CD4-positive, alpha-beta T cell (primary cell): ENCODE measurements at regions of chr1 and their contacts with region 1.

Region 1: DNA sequence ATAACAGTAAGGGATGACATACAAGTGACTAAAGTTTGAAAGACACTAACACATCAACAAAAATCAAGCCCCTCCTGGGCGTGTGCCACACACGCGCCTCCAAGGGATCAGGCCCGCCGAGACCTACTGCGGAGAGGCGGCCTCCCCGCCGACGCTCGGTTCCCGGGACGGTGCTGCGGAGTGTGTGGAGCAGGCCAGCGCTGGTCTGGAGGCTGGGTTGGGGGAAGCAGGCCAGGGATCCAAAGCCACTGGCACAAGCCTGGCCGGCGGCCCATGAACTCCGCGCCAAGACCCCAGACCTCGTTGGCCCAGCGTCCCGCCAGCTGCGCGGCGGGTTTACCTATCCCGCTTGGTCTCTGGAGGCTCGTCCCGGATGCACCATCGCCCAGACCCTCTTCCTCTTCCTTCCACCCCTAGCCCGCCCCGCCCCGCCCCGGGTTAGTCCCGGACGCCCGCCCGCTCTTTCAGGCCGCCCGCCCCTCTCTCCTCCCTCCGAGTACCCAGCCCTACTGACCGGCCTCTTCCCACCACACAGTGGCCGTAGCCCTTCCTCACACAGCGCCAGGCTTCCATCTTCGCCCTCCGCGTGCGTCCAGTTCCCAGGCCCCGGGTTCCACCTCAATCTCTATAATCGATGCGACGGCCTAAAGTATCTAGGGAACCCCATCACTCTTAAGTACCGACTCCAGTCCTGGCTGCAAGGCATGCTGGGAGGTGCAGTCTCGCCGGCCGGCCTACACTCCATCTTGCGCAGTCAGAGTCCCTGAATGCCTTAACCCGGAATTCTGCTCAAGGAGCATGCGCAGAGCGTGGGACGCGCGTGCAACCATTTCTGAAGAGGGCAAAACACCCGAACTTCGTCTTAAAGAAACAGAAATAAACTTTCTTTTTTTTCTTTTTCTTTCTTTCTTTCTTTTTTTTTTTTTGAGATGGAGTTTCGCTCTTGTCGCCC is at the start of gene ANGEL2:
- DNase-seq: peak; percentile 88 to 99 (median 94)
- ATAC-seq: peak; percentile 98
- H3K4me3 ChIP-seq: peak within 1 kb of the TSS; percentile 72
- H3K4me3 Mint-ChIP-seq: peak within 1 kb of the TSS; percentile 99
- H3K27ac ChIP-seq: peak within 1 kb of the TSS; percentile 75 to 86
- H3K27ac Mint-ChIP-seq: peak within 1 kb of the TSS; percentile 96
- H3K4me1 ChIP-seq: peaks cover 12% of the 10 kb centered on the region
- H3K4me1 Mint-ChIP-seq: peaks cover 44% of the 10 kb centered on the region
- H3K27me3 ChIP-seq: no peaks in the 10 kb centered on the region
- H3K27me3 Mint-ChIP-seq: no peaks in the 10 kb centered on the region
- CTCF ChIP-seq: no peak
- total RNA-seq, gene ANGEL2: 53.0 to 56.2 TPM

Region 2: GRCh38 chr1:211675230-211676105 is 1339.9 kb before region 1 on chr1 and contains the start of gene NEK2:
- CTCF ChIA-PET with region 1: no interaction called
- POLR2A ChIA-PET with region 1: no interaction called
- intact Hi-C with region 1: loop called in 1 of 2 experiments (anchors 10 kb)
- DNase-seq: peak; percentile 70 to 93 (median 79)
- ATAC-seq: peak; percentile 94
- H3K4me3 ChIP-seq: peak within 1 kb of the TSS; percentile 67
- H3K4me3 Mint-ChIP-seq: peak within 1 kb of the TSS; percentile 92
- H3K27ac ChIP-seq: no peak within 1 kb of the TSS
- H3K27ac Mint-ChIP-seq: peak within 1 kb of the TSS; percentile 73
- H3K4me1 ChIP-seq: peaks cover 15% of the 10 kb centered on the region
- H3K4me1 Mint-ChIP-seq: peaks cover 7% of the 10 kb centered on the region
- H3K27me3 ChIP-seq: no peaks in the 10 kb centered on the region
- H3K27me3 Mint-ChIP-seq: no peaks in the 10 kb centered on the region
- CTCF ChIP-seq: no peak
- total RNA-seq, gene NEK2: not detected

Region 3: DNA sequence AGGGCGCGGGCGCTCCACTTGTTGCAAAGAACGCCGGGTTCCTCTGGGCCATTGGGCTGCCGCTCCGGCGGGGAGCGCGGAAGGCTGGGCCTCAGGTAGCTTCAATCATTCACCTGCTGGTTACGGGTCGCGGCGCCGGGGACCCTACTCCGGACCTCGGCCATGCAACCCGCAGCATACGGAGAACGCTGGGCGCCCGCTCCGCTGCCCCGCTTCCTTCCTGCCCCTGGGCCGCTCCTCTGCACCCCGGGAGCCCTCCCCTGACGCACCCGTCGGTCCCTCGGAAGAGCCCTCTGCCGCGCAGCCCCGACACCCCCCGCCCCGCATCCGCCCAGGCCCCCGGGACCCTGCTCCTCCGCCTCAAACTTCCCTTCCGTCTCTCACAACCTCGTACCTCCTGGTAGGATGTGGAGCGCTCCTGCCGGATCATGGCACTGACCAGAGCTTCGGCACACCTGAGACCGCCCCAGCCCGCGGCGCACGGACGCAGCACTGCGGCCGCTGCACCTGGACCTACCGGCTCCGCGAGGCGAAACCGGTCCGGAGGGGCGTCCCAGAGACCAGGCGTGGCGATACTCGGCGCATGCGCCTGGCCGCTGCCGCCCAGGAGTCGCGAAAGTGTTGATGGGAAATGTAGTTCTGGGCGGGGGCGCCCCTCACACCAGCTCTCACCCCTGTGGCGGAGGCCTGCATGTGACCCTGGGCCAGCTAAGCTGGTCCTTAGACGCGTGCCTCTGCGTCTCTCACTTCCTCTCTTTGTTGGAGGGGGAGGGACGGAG is 600.9 kb before region 1 on chr1 and contains the start of gene PACC1:
- CTCF ChIA-PET with region 1: no interaction called
- POLR2A ChIA-PET with region 1: no interaction called
- intact Hi-C with region 1: loop called in 1 of 2 experiments (anchors 10 kb)
- DNase-seq: peak; percentile 70 to 95 (median 81)
- ATAC-seq: peak; percentile 85
- H3K4me3 ChIP-seq: peak within 1 kb of the TSS; percentile 76
- H3K4me3 Mint-ChIP-seq: peak within 1 kb of the TSS; percentile 89
- H3K27ac ChIP-seq: peak within 1 kb of the TSS; percentile 40 to 72
- H3K27ac Mint-ChIP-seq: peak within 1 kb of the TSS; percentile 82
- H3K4me1 ChIP-seq: peaks cover 30% of the 10 kb centered on the region
- H3K4me1 Mint-ChIP-seq: peaks cover 22% of the 10 kb centered on the region
- H3K27me3 ChIP-seq: no peaks in the 10 kb centered on the region
- H3K27me3 Mint-ChIP-seq: no peaks in the 10 kb centered on the region
- CTCF ChIP-seq: no peak
- total RNA-seq, gene PACC1: 1.8 to 2.1 TPM

Region 4: DNA sequence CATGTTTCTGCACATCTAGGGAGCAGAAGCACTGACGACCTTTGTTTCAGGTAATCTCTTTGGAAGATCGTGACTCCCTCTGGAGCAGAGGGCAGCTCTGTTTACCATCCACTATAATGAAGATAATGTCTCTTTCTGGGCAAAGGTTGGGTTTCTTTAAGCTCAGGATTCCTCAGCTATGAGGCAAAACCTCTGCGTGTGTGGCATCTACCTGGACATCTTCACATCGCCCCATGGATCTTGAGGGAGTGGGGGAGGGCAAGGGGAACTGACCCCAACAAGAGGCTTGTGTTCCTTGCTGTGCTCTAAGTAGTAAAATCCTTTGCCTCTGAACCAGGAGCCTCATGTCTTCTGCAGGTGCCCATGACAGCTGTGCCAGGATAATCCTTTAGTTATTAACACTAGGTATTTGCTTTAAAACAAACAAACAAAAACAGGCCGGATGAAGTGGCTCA is 187.5 kb before region 1 on chr1:
- CTCF ChIA-PET with region 1: no interaction called
- POLR2A ChIA-PET with region 1: no interaction called
- intact Hi-C with region 1: no loop called
- DNase-seq: no peak
- ATAC-seq: no peak
- H3K4me3 ChIP-seq: no peak overlapping the region
- H3K4me3 Mint-ChIP-seq: no peak overlapping the region
- H3K27ac ChIP-seq: no peak overlapping the region
- H3K27ac Mint-ChIP-seq: no peak overlapping the region
- H3K4me1 ChIP-seq: no peaks in the 10 kb centered on the region
- H3K4me1 Mint-ChIP-seq: no peaks in the 10 kb centered on the region
- H3K27me3 ChIP-seq: no peaks in the 10 kb centered on the region
- H3K27me3 Mint-ChIP-seq: no peaks in the 10 kb centered on the region
- CTCF ChIP-seq: no peak

Region 5: GRCh38 chr1:212857992-212858460 is 157.3 kb before region 1 on chr1 and contains the start of gene FLVCR1:
- CTCF ChIA-PET with region 1: no interaction called
- POLR2A ChIA-PET with region 1: interaction called, 3 read pairs
- intact Hi-C with region 1: loop called in 1 of 2 experiments (anchors 5 kb)
- DNase-seq: peak; percentile 78 to 95 (median 86)
- ATAC-seq: peak; percentile 95
- H3K4me3 ChIP-seq: peak within 1 kb of the TSS; percentile 92
- H3K4me3 Mint-ChIP-seq: peak within 1 kb of the TSS; percentile 72
- H3K27ac ChIP-seq: peak within 1 kb of the TSS; percentile 55 to 63
- H3K27ac Mint-ChIP-seq: peak within 1 kb of the TSS; percentile 89
- H3K4me1 ChIP-seq: peaks cover 33% of the 10 kb centered on the region
- H3K4me1 Mint-ChIP-seq: peaks cover 18% of the 10 kb centered on the region
- H3K27me3 ChIP-seq: no peaks in the 10 kb centered on the region
- H3K27me3 Mint-ChIP-seq: no peaks in the 10 kb centered on the region
- CTCF ChIP-seq: no peak
- total RNA-seq, gene FLVCR1: 8.4 to 9.5 TPM

Region 6: DNA sequence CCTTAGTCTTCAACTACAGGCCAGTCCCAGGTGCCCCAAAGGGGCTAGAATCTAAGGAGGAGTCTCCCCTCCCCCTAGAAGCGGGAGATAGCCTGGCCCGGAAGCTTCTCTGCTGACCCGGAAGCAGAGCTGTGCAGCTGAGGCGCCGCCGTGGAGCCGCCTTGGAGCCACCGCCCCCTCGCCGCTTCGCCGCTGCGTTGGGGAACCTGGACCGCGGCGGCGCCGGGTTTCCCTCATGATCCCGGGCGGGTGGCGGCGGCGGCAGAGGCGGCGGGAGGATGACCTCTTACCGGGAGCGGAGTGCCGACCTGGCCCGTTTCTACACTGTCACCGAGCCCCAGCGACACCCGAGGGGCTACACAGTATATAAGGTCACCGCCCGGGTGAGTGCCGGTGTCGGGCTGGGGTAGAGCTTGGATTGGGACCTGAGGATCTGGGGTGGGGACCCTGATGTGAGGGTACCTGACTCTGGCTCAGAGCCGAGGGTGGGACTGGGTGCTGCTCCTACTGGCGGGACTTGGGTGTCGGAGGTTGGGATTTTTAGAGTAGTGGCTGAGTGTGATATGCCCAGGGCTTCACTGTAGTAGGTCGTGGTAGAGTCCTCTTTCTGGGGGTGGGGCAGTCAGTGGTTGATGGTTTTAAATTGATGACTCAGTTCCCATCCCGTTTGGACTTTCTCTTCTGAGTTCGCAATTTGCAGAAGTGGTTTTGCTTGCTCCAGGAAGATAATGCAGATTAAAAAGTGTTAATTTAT is 35.9 kb after region 1 on chr1 and contains the start of gene RPS6KC1:
- CTCF ChIA-PET with region 1: interaction called, 3 read pairs
- POLR2A ChIA-PET with region 1: interaction called, 5 read pairs
- intact Hi-C with region 1: loop called (anchors 1 kb)
- DNase-seq: peak; percentile 69 to 90 (median 76)
- ATAC-seq: peak; percentile 97
- H3K4me3 ChIP-seq: peak within 1 kb of the TSS; percentile 82
- H3K4me3 Mint-ChIP-seq: peak within 1 kb of the TSS; percentile 90
- H3K27ac ChIP-seq: peak within 1 kb of the TSS; percentile 50 to 72
- H3K27ac Mint-ChIP-seq: peak within 1 kb of the TSS; percentile 84
- H3K4me1 ChIP-seq: peaks cover 17% of the 10 kb centered on the region
- H3K4me1 Mint-ChIP-seq: peaks cover 39% of the 10 kb centered on the region
- H3K27me3 ChIP-seq: peaks cover 0 to 7% of the 10 kb centered on the region in 2 experiments
- H3K27me3 Mint-ChIP-seq: peaks cover 26% of the 10 kb centered on the region
- CTCF ChIP-seq: no peak
- total RNA-seq, gene RPS6KC1: 6.2 to 7.0 TPM